Breast epithelium (tissue), 4 donors: ENCODE measurements at regions of chr6 and their contacts with region 1.

Region 1: DNA sequence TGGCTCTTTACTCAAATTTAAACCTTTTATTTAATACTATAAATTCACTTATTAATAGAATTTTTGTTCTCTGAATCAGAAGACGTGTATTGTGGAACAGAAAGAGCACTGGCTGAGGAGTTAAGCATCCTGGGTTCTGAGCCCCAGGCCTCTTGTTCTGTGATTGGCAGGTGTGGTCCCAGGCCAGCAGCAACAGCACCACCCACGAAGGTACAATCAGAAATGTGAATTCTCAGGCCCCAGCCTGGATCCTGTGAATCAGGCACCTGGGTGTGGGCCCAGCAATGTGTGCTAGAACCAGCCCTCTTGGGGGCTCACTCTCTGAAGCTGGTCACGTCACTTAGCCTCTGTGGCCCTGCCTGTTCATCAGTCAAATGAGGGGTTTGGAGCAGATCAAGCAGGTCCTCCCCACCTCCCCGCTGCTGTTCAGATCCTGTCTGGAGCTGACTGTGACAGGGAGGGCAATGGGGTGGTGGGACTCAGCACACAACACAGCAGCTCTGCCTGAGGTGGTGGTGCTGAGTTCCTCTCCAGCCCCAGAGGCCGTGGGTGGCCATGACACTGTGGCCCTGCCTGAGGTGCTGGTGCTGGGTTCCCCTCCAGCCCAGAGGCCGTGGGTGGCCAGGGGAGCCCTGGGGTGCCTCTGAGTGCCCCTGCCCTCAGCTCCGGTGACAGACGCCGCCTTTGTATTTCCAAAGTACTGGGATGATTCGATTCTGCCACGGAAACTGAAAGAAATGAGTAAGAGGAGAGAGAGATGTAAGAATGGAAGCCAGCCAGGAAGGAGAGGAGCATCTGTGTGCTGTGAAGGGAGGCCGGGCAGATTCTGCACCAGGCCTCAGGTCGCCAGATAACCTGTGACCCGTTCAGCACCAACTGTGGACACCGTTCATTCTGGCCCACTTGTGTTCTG is 41.6 kb upstream of the FRMD1 start:
- DNase-seq: peak; percentile 13 to 46
- H3K4me3 ChIP-seq: no peak overlapping the region
- H3K27ac ChIP-seq: no peak overlapping the region
- H3K4me1 ChIP-seq: no peaks in the 10 kb centered on the region
- H3K27me3 ChIP-seq: no peaks in the 10 kb centered on the region
- CTCF ChIP-seq: no peak
- POLR2A ChIP-seq: no peak

Region 2: DNA sequence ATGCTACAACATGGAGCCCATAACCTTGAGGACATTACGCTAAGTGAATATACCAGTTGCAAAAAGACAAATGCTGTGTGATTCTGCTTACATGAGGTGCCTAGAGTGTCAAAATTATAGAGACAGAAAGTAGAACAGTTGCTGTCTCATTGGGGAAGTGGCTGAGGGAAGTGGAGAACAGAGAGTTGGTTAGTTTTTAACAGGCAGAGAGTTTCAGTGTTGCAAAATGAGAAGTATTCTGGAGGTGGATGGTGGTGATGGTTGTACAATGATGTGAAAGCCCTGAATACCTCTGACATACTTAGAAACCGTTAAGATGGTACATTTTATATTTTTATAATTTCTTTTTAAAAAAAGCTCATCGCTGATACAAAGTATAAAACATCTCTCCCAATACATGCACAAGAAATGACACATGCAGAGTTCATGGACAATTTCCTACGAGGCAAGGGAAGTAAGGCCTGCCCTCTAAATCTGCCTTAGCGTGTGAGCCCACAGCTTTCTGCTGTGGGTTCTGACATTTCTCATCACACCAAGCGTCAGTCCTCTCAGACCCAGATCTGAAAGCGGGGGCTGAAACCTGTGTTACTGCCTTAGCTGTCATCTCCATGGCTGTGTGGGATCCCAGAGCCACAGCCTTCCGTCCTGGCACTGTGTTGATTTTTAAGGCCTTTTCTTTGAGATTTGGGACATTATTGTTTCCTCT is 1290.3 kb before region 1 on chr6:
- intact Hi-C with region 1: no loop called
- DNase-seq: no peak
- H3K4me3 ChIP-seq: no peak overlapping the region
- H3K27ac ChIP-seq: no peak overlapping the region
- H3K4me1 ChIP-seq: no peaks in the 10 kb centered on the region
- H3K27me3 ChIP-seq: no peaks in the 10 kb centered on the region
- CTCF ChIP-seq: no peak
- POLR2A ChIP-seq: no peak

Region 3: GRCh38 chr6:167661552-167662044 is 459.0 kb before region 1 on chr6:
- intact Hi-C with region 1: no loop called
- DNase-seq: no peak
- H3K4me3 ChIP-seq: no peak overlapping the region
- H3K27ac ChIP-seq: no peak overlapping the region
- H3K4me1 ChIP-seq: no peaks in the 10 kb centered on the region
- H3K27me3 ChIP-seq: no peaks in the 10 kb centered on the region
- CTCF ChIP-seq: no peak
- POLR2A ChIP-seq: no peak

Region 4: GRCh38 chr6:167910016-167910415 is 210.6 kb before region 1 on chr6:
- intact Hi-C with region 1: loop called (anchors 5 kb)
- DNase-seq: no peak
- H3K4me3 ChIP-seq: no peak overlapping the region
- H3K27ac ChIP-seq: no peak overlapping the region
- H3K4me1 ChIP-seq: no peaks in the 10 kb centered on the region
- H3K27me3 ChIP-seq: no peaks in the 10 kb centered on the region
- CTCF ChIP-seq: no peak
- POLR2A ChIP-seq: no peak

Region 5: GRCh38 chr6:168071336-168072019 is 49.2 kb before region 1 on chr6:
- intact Hi-C with region 1: loop called (anchors 1 kb)
- DNase-seq: no peak
- H3K4me3 ChIP-seq: no peak overlapping the region
- H3K27ac ChIP-seq: peak overlapping the region in 1 of 2 donors; percentile 38
- H3K4me1 ChIP-seq: no peaks in the 10 kb centered on the region
- H3K27me3 ChIP-seq: no peaks in the 10 kb centered on the region
- CTCF ChIP-seq: peak in 1 of 3 donors; percentile 13
- POLR2A ChIP-seq: no peak